ENCODE measurements at regions of chr1 and their contacts with region 1.

Region 1: DNA sequence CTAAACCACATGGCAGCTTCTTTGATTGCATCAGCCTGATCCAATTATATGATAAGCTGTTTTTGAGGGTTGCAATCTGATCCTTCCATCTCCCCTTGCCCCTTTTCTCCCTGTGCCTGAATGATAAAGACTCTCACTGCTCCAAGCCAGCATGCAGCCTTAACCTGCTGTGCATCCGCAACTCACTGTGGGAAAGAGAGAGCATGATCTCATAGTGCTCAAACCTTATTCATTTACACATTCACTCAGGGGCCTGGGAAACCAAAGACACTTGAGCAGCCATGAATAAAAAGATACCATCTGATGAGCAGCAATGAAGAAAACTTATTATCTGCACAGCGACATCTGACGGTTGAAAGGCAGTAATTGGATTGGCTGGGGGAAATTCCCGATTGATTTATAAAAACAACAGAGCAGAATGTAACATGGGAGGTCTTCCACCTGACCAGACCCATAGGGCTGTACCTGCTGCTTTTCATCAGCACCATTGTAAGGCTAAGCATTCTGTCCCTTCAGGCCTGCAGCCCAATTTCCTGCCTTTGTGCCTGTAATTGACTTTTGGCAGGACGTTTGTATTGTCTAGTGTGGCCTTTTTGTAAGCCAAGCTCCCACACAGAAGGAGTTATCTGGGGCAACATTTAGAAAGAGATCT is 62.5 kb downstream of the KIAA0040 start:
- DNase-seq: no peak
- ATAC-seq: no peak
- H3K4me3 ChIP-seq: no peak overlapping the region
- H3K4me1 ChIP-seq: no peaks in the 10 kb centered on the region
- CTCF ChIP-seq: no peak

Region 2: GRCh38 chr1:174990382-174990999 is 139.6 kb before region 1 on chr1:
- intact Hi-C with region 1: no loop called
- DNase-seq: peak in 1 of 3 donors; percentile 35
- ATAC-seq: peak; percentile 95
- H3K4me3 ChIP-seq: no peak overlapping the region
- H3K4me1 ChIP-seq: no peaks in the 10 kb centered on the region
- CTCF ChIP-seq: no peak

Region 3: GRCh38 chr1:175015243-175015642 is 114.9 kb before region 1 on chr1:
- intact Hi-C with region 1: no loop called
- DNase-seq: no peak
- ATAC-seq: no peak
- H3K4me3 ChIP-seq: no peak overlapping the region
- H3K4me1 ChIP-seq: no peaks in the 10 kb centered on the region
- CTCF ChIP-seq: no peak

Region 4: DNA sequence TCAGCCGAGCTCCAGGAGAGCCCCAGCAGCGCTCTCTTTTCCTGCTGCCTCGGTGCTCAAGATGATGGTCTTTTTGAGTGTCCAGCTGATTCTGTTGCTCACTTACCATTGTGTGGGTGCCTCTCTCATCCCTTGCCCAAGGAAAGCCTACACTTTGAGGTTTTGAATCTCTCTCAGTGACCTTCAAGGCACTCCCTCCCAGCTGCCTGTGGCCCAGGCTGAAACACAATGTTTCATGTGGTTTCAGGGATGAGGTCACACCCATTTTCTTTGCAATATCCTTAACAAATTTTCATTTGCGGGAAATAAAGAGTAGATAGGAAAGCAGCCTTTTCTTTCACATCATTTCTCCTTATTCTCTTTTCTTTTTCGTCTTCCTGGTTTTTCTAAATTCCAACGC is 94.3 kb before region 1 on chr1:
- intact Hi-C with region 1: loop called (anchors 10 kb)
- DNase-seq: no peak
- ATAC-seq: no peak
- H3K4me3 ChIP-seq: no peak overlapping the region
- H3K4me1 ChIP-seq: no peaks in the 10 kb centered on the region
- CTCF ChIP-seq: no peak

Region 5: GRCh38 chr1:175208773-175209492 is 78.8 kb after region 1 on chr1:
- intact Hi-C with region 1: no loop called
- DNase-seq: peak in 1 of 3 donors; percentile 38
- ATAC-seq: peak; percentile 88
- H3K4me3 ChIP-seq: no peak overlapping the region
- H3K4me1 ChIP-seq: peaks cover 5% of the 10 kb centered on the region
- CTCF ChIP-seq: no peak

Measured in mucosa of descending colon (tissue), 3 donors.